MCF 10A (cell line): ENCODE measurements at regions of chr5 and their contacts with region 1.

Region 1: GRCh38 chr5:68215208-68215897 is at the start of gene PIK3R1:
- DNase-seq: peak; percentile 94
- H3K4me3 Mint-ChIP-seq: peak within 1 kb of the TSS; percentile 92
- H3K27ac Mint-ChIP-seq: peak within 1 kb of the TSS; percentile 87
- H3K4me1 Mint-ChIP-seq: peaks cover 17% of the 10 kb centered on the region
- H3K27me3 Mint-ChIP-seq: no peaks in the 10 kb centered on the region
- CTCF ChIP-seq: no peak
- total RNA-seq, gene PIK3R1: 124 and 151 TPM in 2 replicates

Region 2: GRCh38 chr5:67301285-67301903 is 914.0 kb before region 1 on chr5:
- CTCF ChIA-PET with region 1: no interaction called
- POLR2A ChIA-PET with region 1: interaction called, 38 read pairs
- intact Hi-C with region 1: no loop called
- DNase-seq: peak; percentile 99
- H3K4me3 Mint-ChIP-seq: no peak overlapping the region
- H3K27ac Mint-ChIP-seq: peak overlapping the region; percentile 97
- H3K4me1 Mint-ChIP-seq: peaks cover 56% of the 10 kb centered on the region
- H3K27me3 Mint-ChIP-seq: no peaks in the 10 kb centered on the region
- CTCF ChIP-seq: no peak

Region 3: DNA sequence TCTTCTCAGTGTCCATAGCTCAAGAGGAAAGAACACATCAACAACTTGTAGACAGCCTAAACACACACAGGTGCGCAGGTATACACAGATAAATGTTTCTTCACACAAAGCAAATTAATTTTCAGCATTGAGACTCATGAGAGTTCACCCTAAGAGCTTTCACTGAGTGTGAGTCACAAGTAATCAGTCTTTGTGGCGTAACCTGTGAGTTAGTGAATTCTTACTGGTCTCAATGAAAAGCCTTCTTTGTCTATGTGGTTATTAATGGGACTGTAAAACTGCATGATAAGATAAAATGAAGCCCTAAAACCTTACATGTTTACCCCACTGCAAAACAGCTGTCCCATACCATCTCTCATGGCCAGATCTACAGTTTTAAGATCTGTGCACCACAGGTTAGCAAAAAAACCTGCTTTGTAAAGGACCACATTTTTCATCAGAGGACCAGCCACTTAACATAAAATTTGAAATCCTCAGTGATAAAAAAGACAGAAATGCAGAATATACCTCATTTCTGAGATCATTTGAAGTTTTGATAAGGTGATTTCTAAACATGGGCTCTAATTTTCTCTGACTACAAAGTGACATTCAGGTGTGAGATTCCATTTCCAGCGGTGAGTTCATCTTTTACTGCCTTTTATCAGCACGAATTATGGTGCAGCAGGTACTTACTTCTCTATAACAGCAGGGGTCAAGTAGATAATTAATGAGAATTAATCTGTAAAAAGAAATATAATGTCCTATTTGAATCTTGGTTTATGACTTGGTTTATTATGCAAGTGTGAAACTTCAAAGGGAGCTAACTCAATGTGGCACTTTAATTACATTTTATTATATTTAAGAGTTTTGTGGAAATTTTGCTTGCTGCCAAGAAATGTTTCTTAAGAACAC is 335.5 kb before region 1 on chr5:
- CTCF ChIA-PET with region 1: interaction called, 4 read pairs
- POLR2A ChIA-PET with region 1: interaction called, 57 read pairs
- intact Hi-C with region 1: no loop called
- DNase-seq: peak; percentile 62
- H3K4me3 Mint-ChIP-seq: no peak overlapping the region
- H3K27ac Mint-ChIP-seq: peak overlapping the region; percentile 74
- H3K4me1 Mint-ChIP-seq: peaks cover 42% of the 10 kb centered on the region
- H3K27me3 Mint-ChIP-seq: no peaks in the 10 kb centered on the region
- CTCF ChIP-seq: no peak

Region 4: DNA sequence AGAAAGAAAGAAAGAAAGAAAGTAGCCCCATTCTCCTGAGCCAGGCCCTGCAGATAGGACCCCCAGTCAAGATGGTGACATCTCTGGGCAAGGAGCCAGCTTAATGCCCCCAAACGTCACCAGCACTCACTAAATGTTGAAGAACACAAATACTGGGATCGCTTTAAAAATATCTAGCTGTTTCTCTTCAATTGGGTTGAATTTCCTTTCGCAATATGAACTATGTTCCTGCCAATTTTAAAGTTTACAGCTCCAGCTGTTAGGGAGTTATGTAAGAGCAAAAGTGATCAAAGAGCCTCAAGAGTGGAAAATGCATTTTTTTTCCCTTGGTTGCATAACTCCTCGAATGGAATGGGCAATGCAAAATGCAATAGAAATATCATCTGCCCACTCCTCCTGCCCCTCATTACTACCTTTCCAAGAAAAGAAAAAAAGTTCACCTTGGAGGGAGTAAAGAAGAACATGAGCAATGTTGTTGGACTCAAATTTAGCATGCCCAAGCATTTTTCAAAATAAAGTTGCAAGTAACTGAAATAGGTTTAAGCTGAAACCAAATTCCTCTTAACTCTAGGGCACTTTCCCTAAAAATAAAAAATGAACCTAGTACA is 244.0 kb before region 1 on chr5:
- CTCF ChIA-PET with region 1: interaction called, 4 read pairs
- POLR2A ChIA-PET with region 1: interaction called, 23 read pairs
- intact Hi-C with region 1: no loop called
- DNase-seq: peak; percentile 87
- H3K4me3 Mint-ChIP-seq: no peak overlapping the region
- H3K27ac Mint-ChIP-seq: no peak overlapping the region
- H3K4me1 Mint-ChIP-seq: peaks cover 29% of the 10 kb centered on the region
- H3K27me3 Mint-ChIP-seq: no peaks in the 10 kb centered on the region
- CTCF ChIP-seq: no peak

Region 5: GRCh38 chr5:67983251-67984110 is 231.9 kb before region 1 on chr5:
- CTCF ChIA-PET with region 1: no interaction called
- POLR2A ChIA-PET with region 1: no interaction called
- intact Hi-C with region 1: no loop called
- DNase-seq: peak; percentile 48
- H3K4me3 Mint-ChIP-seq: no peak overlapping the region
- H3K27ac Mint-ChIP-seq: no peak overlapping the region
- H3K4me1 Mint-ChIP-seq: peaks cover 13% of the 10 kb centered on the region
- H3K27me3 Mint-ChIP-seq: no peaks in the 10 kb centered on the region
- CTCF ChIP-seq: no peak

Region 6: GRCh38 chr5:68178579-68178978 is 36.8 kb before region 1 on chr5:
- CTCF ChIA-PET with region 1: interaction called, 4 read pairs
- POLR2A ChIA-PET with region 1: interaction called, 10 read pairs
- intact Hi-C with region 1: no loop called
- DNase-seq: peak; percentile 79
- H3K4me3 Mint-ChIP-seq: no peak overlapping the region
- H3K27ac Mint-ChIP-seq: no peak overlapping the region
- H3K4me1 Mint-ChIP-seq: peaks cover 16% of the 10 kb centered on the region
- H3K27me3 Mint-ChIP-seq: no peaks in the 10 kb centered on the region
- CTCF ChIP-seq: no peak

Region 7: DNA sequence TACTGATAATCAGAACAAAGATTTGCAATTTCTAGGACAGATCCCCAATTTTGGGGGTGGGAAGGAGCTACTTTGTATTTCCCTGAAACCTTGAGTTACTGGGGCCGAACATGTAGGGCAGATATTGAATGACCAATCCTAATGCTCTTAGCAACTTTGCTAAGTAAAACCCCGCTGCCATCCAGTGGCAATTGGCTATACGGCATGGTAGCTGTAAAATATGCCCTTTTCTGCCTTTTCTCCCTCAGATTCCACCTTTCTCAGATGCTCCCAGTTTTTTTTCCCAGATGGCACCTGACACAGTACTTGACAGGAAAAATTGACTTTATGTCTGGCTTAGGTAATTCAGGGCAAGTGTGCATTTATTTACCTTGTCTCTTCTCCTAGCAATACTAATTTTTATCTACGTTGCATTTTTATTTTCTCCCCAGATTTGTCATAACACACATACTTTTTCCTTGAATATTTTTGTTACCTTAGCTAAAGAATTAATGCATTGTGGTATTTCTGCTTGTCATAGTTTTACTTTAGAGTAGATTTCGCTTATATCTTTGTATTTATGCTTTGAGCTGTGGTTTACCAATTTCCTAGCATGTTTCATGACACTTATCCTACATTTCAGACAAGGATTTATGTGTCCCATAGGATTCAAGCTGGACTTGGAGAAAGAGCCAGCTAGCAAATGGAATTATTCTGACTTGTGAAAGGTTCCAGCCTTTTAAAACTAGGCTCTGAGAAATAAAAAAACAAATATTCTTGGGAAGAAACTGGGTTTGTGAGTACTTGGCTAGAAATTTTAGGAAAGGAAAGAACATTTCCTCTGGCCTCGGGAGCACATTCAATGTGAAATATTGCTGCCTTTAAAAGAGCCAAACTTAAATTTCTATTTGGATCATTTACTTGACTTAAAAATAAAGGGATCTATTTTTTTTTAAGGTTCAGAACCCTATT is 37.6 kb after region 1 on chr5:
- CTCF ChIA-PET with region 1: interaction called, 6 read pairs
- POLR2A ChIA-PET with region 1: interaction called, 54 read pairs
- intact Hi-C with region 1: loop called (anchors 1 kb)
- DNase-seq: peak; percentile 66
- H3K4me3 Mint-ChIP-seq: peak overlapping the region; percentile 61
- H3K27ac Mint-ChIP-seq: peak overlapping the region; percentile 47
- H3K4me1 Mint-ChIP-seq: peaks cover 84% of the 10 kb centered on the region
- H3K27me3 Mint-ChIP-seq: no peaks in the 10 kb centered on the region
- CTCF ChIP-seq: peak; percentile 73